ENCODE measurements at regions of chr22 and their contacts with region 1.

Region 1: DNA sequence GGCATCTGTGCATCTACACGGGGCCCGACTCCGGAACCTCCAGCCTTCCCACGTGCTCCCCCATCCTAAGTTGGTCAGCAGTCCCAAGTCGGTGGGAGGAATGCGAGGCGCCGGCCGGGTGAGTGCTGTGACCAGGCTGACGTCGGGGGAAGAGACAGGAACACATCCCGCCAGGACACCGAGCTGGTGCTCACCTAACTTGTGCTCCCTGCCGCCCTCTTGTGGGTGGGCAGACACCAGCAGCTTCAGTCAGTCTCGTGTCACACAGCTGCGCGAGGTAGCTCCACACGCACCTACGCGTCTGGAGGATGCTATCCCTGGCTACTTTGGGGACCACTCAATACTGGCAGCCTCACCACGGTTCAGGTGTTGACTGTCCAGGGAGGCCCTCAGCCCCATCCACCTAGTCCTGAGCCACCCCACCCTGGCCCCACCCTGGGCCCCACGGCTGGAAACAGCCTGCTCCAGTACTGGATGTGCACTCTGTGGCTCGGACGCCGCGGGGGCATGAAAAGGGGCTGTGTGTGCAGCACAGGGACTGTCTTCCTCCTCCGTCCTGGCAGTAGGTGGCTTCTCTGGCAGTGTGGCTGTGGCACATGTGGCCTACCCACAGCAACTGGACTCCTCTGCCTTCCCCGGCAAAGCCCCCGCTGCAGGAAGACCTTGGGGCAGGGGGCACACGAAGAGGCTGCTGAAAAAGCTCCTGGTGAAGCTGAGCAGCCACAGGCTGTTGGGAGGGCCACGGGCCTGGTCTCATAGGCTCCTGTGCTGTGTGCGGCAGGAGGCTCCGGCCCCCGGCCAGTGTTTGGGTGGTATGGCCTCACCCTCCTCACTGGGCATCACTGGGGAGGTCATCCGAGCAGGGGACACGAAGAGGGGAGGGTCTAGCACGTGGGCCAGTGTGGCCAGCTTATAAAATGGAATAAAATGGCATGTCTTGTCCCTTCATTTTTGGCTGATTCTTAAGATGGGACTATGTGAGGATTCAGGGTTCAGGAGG is 11.2 kb upstream of the BID start:
- DNase-seq: peak in 1 of 2 experiments; percentile 68
- H3K4me3 ChIP-seq: no peak overlapping the region
- H3K27ac ChIP-seq: no peak overlapping the region
- H3K4me1 ChIP-seq: peaks cover 16% of the 10 kb centered on the region
- H3K27me3 ChIP-seq: no peaks in the 10 kb centered on the region
- CTCF ChIP-seq: peak; percentile 70

Region 2: DNA sequence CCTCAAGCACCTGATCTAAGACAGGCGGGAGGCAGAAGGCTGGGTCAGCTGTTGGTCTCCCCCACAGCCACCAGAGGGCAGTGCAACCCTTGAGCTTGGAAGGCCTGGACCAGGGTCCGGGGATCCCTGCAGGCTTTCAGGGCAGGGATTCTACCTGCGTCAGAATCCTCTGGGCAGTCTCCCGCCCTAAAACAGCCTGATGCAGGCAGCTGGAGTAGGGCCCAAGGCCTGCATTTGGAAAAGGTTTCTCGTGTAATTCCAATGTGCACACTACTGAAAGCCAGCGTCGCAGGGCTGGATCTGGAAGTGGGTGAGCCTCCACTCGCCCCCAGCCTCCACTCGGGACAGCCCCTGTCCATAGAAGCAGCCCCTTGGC is 43.0 kb before region 1 on chr22:
- CTCF ChIA-PET with region 1: interaction called, 5 read pairs
- POLR2A ChIA-PET with region 1: interaction called, 10 read pairs
- intact Hi-C with region 1: loop called (anchors 5 kb)
- DNase-seq: peak; percentile 48 to 54
- H3K4me3 ChIP-seq: no peak overlapping the region
- H3K27ac ChIP-seq: no peak overlapping the region
- H3K4me1 ChIP-seq: no peaks in the 10 kb centered on the region
- H3K27me3 ChIP-seq: no peaks in the 10 kb centered on the region
- CTCF ChIP-seq: peak; percentile 74

Region 3: GRCh38 chr22:17754233-17754925 is 31.1 kb before region 1 on chr22:
- CTCF ChIA-PET with region 1: no interaction called
- POLR2A ChIA-PET with region 1: no interaction called
- intact Hi-C with region 1: no loop called
- DNase-seq: peak in 1 of 2 experiments; percentile 9
- H3K4me3 ChIP-seq: no peak overlapping the region
- H3K27ac ChIP-seq: no peak overlapping the region
- H3K4me1 ChIP-seq: peaks cover 12% of the 10 kb centered on the region; the same call in 1 of the 2 replicates
- H3K27me3 ChIP-seq: no peaks in the 10 kb centered on the region
- CTCF ChIP-seq: peak; percentile 42

Region 4: DNA sequence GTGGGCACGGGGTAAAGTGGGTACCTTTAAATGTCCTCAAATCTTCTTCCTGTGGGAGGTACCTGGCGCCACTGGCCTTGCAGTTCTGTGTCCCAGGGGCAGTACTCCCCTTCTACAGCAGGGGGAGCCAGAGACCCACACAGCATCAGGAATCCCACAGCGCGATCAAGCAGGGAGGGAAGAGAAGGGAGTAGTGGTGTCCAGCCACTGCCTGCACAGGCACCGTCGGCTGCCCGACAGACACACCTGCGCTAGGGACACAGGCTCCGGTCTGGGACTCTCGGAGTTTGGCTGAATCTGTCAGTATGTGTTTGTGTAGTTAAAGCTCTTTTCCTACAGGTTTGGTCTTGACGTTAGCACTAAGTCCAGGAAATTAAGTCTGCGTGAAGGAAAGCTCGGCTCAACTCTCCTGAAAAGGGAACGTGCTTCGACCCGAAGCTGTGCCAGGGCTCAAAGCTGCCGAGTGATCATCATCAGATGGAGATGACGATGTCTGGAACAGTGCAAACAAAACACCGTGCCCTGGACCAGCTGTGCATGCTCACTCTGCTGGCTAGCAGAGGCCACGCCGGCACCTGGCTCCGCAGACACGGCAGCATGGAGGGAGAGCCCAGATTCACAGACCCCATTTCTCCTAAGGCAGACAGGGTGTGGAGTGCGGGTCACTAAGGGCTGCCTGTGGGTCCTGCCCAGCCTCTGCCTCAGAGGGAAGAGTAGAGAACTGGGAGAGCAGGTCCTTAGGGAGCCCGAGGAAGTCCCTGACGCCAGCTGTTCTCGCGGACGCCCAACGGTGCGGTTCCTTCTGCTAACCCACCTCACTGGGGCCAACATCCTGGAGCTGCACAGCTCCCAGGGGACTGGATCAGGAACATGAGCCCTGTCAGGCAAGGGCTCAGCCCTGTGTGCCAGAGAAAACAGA is 44.8 kb after region 1 on chr22:
- CTCF ChIA-PET with region 1: interaction called, 13 read pairs
- POLR2A ChIA-PET with region 1: no interaction called
- intact Hi-C with region 1: no loop called
- DNase-seq: peak; percentile 50 to 81
- H3K4me3 ChIP-seq: no peak overlapping the region
- H3K27ac ChIP-seq: no peak overlapping the region
- H3K4me1 ChIP-seq: no peaks in the 10 kb centered on the region
- H3K27me3 ChIP-seq: no peaks in the 10 kb centered on the region
- CTCF ChIP-seq: peak; percentile 91

Measured in PC-9 (cell line).